ENCODE measurements at regions of chr7 and their contacts with region 1.

Region 1: GRCh38 chr7:77759294-77759889 is 38.8 kb downstream of the TMEM60 start:
- DNase-seq: peak; percentile 21 to 89 (median 60)
- ATAC-seq: peak; percentile 83
- H3K4me3 ChIP-seq: no peak overlapping the region
- H3K4me3 Mint-ChIP-seq: no peak overlapping the region
- H3K27ac ChIP-seq: no peak overlapping the region
- H3K27ac Mint-ChIP-seq: peak overlapping the region; percentile 63
- H3K4me1 ChIP-seq: no peaks in the 10 kb centered on the region
- H3K4me1 Mint-ChIP-seq: peaks cover 52% of the 10 kb centered on the region
- H3K27me3 ChIP-seq: no peaks in the 10 kb centered on the region
- H3K27me3 Mint-ChIP-seq: no peaks in the 10 kb centered on the region
- CTCF ChIP-seq: peak; percentile 97

Region 2: GRCh38 chr7:77651573-77652162 is 107.7 kb before region 1 on chr7:
- CTCF ChIA-PET with region 1: interaction called, 25 read pairs
- POLR2A ChIA-PET with region 1: interaction called, 4 read pairs
- intact Hi-C with region 1: loop called (anchors 1 kb)
- DNase-seq: peak in 8 of 14 experiments; percentile 2 to 70 (median 38)
- ATAC-seq: no peak
- H3K4me3 ChIP-seq: no peak overlapping the region
- H3K4me3 Mint-ChIP-seq: no peak overlapping the region
- H3K27ac ChIP-seq: no peak overlapping the region
- H3K27ac Mint-ChIP-seq: no peak overlapping the region
- H3K4me1 ChIP-seq: no peaks in the 10 kb centered on the region
- H3K4me1 Mint-ChIP-seq: no peaks in the 10 kb centered on the region
- H3K27me3 ChIP-seq: no peaks in the 10 kb centered on the region
- H3K27me3 Mint-ChIP-seq: no peaks in the 10 kb centered on the region
- CTCF ChIP-seq: peak; percentile 91

Region 3: DNA sequence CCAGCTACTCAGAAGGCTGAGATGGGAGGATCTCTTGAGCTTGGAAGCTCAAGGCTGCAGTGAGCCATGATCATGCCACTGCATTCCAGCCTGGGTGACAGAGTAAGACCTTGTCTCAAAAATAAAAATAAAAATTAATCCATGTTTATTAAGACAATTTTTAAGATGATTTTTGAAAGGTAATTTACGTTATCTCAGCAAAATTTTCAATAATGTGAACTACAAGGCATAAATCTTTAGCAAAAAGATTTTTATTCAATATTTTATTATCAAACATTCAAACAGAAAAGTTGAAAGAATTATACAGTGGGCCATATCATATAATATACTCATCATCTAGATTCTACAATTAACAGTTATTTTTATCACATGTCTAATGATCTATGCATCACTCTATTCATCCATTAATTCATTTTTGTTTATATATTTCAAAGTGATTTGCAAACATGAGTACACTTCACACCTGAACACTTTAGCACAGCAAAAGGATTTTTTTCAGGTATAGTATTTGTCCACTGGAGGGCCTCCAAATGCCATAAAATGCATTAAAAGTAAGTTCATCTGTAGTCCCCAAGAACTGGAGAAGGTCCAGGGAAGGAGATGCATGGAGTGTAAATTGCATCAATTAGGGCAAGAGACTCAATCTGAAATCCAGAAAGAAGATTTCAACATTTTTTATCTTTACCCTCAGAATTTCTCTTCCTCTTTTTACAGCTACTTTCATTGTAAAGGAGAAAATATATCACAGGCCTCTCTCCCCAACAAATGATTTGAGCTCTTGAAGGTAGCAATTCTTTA is 101.8 kb before region 1 on chr7:
- CTCF ChIA-PET with region 1: interaction called, 21 read pairs
- POLR2A ChIA-PET with region 1: interaction called, 4 read pairs
- intact Hi-C with region 1: loop called (anchors 1 kb)
- DNase-seq: peak in 4 of 14 experiments; percentile 29 to 66 (median 64)
- ATAC-seq: peak; percentile 54
- H3K4me3 ChIP-seq: no peak overlapping the region
- H3K4me3 Mint-ChIP-seq: no peak overlapping the region
- H3K27ac ChIP-seq: no peak overlapping the region
- H3K27ac Mint-ChIP-seq: no peak overlapping the region
- H3K4me1 ChIP-seq: no peaks in the 10 kb centered on the region
- H3K4me1 Mint-ChIP-seq: no peaks in the 10 kb centered on the region
- H3K27me3 ChIP-seq: no peaks in the 10 kb centered on the region
- H3K27me3 Mint-ChIP-seq: no peaks in the 10 kb centered on the region
- CTCF ChIP-seq: peak; percentile 83

Region 4: DNA sequence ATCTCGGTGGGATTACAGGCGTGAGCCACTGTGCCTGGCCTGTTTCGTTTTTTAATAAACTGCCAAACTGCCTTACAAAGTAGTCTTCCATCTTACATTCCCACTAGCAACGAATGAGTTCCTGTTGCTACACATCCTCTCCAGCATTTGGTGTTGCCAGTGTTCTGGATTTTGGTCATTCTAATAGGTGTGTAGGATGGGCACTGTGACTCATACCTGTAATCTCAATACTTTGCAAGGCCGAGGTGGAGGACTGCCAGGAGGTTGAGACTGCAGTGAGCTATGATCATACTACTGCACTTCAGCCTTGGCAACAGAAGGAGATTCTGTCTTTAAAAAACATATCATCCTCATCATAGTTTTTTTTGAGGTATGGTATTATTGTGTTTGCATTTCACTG is 84.5 kb before region 1 on chr7:
- CTCF ChIA-PET with region 1: interaction called, 3 read pairs
- POLR2A ChIA-PET with region 1: no interaction called
- intact Hi-C with region 1: loop called in 1 of 2 experiments (anchors 1 kb)
- DNase-seq: no peak
- ATAC-seq: no peak
- H3K4me3 ChIP-seq: no peak overlapping the region
- H3K4me3 Mint-ChIP-seq: no peak overlapping the region
- H3K27ac ChIP-seq: no peak overlapping the region
- H3K27ac Mint-ChIP-seq: no peak overlapping the region
- H3K4me1 ChIP-seq: no peaks in the 10 kb centered on the region
- H3K4me1 Mint-ChIP-seq: no peaks in the 10 kb centered on the region
- H3K27me3 ChIP-seq: no peaks in the 10 kb centered on the region
- H3K27me3 Mint-ChIP-seq: no peaks in the 10 kb centered on the region
- CTCF ChIP-seq: no peak

Region 5: GRCh38 chr7:77696198-77697028 is 63.0 kb before region 1 on chr7 and contains the start of gene RSBN1L:
- CTCF ChIA-PET with region 1: interaction called, 10 read pairs
- POLR2A ChIA-PET with region 1: interaction called, 8 read pairs
- intact Hi-C with region 1: loop called in 1 of 2 experiments (anchors 10 kb)
- DNase-seq: peak; percentile 95 to 99 (median 98)
- ATAC-seq: peak; percentile 95
- H3K4me3 ChIP-seq: peak within 1 kb of the TSS; percentile 100
- H3K4me3 Mint-ChIP-seq: peak within 1 kb of the TSS; percentile 100
- H3K27ac ChIP-seq: peak within 1 kb of the TSS; percentile 90 to 92
- H3K27ac Mint-ChIP-seq: peak within 1 kb of the TSS; percentile 99
- H3K4me1 ChIP-seq: peaks cover 24% of the 10 kb centered on the region
- H3K4me1 Mint-ChIP-seq: peaks cover 72% of the 10 kb centered on the region
- H3K27me3 ChIP-seq: no peaks in the 10 kb centered on the region
- H3K27me3 Mint-ChIP-seq: no peaks in the 10 kb centered on the region
- CTCF ChIP-seq: peak; percentile 55
- total RNA-seq, gene RSBN1L: 9.0 to 9.6 TPM

Region 6: DNA sequence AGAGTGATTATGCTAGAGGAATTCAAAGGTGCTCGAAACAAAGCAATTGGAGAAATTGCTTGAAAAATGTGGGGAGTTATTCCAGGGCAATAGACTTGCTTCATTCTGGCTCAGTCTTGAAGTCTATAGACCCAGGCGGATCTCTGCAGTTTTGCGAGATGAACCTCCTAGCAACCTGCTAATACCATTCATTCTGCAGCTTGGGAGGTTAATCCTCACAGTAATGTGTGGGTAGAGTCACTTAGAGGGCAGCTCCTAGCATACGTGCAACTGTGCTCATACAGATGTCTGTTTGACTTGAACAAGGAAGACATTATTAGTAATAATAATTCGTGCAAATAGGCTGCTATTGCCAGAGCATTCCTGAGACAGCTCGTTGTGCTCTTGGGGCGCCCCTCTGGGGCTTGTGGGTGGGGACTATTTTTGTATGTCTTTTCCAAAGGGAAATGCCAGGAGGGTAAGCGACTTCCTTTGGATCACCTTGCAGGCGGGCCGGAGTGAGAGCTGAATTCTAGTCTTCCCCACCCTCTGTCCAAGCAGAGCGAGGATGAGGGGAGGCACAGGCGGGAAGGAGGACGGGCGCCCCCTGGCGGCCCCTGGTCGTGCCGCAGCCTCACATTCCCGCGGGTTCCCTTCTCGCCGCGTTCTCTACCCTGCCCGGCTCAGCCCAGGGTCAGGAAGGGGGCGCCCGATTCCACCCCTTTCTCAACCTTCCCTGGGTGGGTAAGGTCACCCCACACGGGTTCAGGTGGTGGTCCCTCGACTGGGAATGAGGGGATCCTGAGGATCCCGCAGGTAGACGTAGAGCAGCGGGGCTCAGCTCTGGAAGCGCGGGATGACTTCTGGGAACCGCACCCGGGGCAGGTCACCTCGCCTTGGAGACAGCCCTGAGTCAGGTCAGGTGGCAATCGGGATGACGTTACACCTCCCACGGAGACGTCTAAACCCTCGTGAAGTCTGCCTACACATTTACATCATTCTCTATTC is 280.7 kb after region 1 on chr7:
- CTCF ChIA-PET with region 1: no interaction called
- POLR2A ChIA-PET with region 1: no interaction called
- intact Hi-C with region 1: loop called in 1 of 2 experiments (anchors 10 kb)
- DNase-seq: peak in 12 of 14 experiments; percentile 26 to 72 (median 42)
- ATAC-seq: peak; percentile 60
- H3K4me3 ChIP-seq: no peak overlapping the region
- H3K4me3 Mint-ChIP-seq: no peak overlapping the region
- H3K27ac ChIP-seq: no peak overlapping the region
- H3K27ac Mint-ChIP-seq: no peak overlapping the region
- H3K4me1 ChIP-seq: peaks cover 6% of the 10 kb centered on the region
- H3K4me1 Mint-ChIP-seq: no peaks in the 10 kb centered on the region
- H3K27me3 ChIP-seq: peaks cover 5 to 8% of the 10 kb centered on the region in 2 experiments
- H3K27me3 Mint-ChIP-seq: peaks cover 67% of the 10 kb centered on the region
- CTCF ChIP-seq: peak; percentile 75

Region 7: GRCh38 chr7:78395298-78396036 is 636.1 kb after region 1 on chr7:
- CTCF ChIA-PET with region 1: no interaction called
- POLR2A ChIA-PET with region 1: no interaction called
- intact Hi-C with region 1: no loop called
- DNase-seq: no peak
- ATAC-seq: no peak
- H3K4me3 ChIP-seq: no peak overlapping the region
- H3K4me3 Mint-ChIP-seq: no peak overlapping the region
- H3K27ac ChIP-seq: no peak overlapping the region
- H3K27ac Mint-ChIP-seq: no peak overlapping the region
- H3K4me1 ChIP-seq: no peaks in the 10 kb centered on the region
- H3K4me1 Mint-ChIP-seq: no peaks in the 10 kb centered on the region
- H3K27me3 ChIP-seq: no peaks in the 10 kb centered on the region
- H3K27me3 Mint-ChIP-seq: no peaks in the 10 kb centered on the region
- CTCF ChIP-seq: no peak

Measured in CD4-positive, alpha-beta T cell (primary cell).